ENCODE measurements at regions of chr18 and their contacts with region 1.

Region 1: DNA sequence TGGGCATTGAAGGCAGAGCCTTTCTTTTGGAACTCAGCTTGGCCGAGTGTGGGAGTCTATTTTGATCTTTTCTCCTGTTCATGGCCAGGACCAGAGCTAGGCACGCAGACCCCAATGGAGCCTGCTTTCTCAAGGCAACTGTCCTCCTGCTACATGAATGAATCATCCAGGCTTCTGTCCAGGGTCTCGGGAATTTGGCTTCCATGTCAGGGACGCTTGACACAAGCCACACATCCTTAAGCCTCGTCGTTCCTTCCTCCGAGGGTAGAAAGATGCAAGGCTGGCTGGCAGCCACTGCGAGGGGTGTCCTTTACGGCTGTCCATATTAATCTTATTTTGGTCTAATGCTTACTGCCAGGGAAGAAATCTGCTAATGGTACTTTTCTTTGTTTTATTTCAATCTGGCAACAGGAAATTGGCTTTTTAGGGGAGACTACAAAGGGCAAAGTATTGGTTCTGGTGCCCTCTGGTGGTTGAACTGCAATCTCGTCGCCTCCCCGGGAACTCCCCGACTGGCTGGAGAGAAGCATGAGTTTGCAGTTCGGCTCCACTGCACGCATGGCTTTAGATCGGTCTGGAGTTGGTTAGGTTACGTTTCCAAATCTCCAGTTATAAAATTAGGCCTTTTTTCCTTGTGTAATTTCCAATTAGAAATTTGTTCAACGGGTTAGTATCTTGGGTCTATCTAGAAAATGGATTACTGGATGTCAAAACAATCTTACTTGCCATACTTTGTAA is 135.2 kb downstream of the ALPK2 start:
- DNase-seq: peak; percentile 79
- ATAC-seq: peak; percentile 84
- H3K4me3 Mint-ChIP-seq: no peak overlapping the region
- H3K27ac Mint-ChIP-seq: no peak overlapping the region
- H3K4me1 Mint-ChIP-seq: peaks cover 34% of the 10 kb centered on the region
- H3K27me3 Mint-ChIP-seq: no peaks in the 10 kb centered on the region; the same call in none of the 2 replicates
- CTCF ChIP-seq: peak; percentile 78

Region 2: GRCh38 chr18:58314284-58314683 is 179.4 kb before region 1 on chr18:
- CTCF ChIA-PET with region 1: no interaction called
- POLR2A ChIA-PET with region 1: no interaction called
- DNase-seq: no peak
- ATAC-seq: no peak
- H3K4me3 Mint-ChIP-seq: no peak overlapping the region
- H3K27ac Mint-ChIP-seq: no peak overlapping the region
- H3K4me1 Mint-ChIP-seq: peaks cover 32% of the 10 kb centered on the region
- H3K27me3 Mint-ChIP-seq: no peaks in the 10 kb centered on the region; the same call in 1 of the 2 replicates
- CTCF ChIP-seq: no peak

Region 3: GRCh38 chr18:58338961-58339592 is 154.6 kb before region 1 on chr18:
- CTCF ChIA-PET with region 1: interaction called, 11 read pairs
- POLR2A ChIA-PET with region 1: no interaction called
- DNase-seq: peak; percentile 60
- ATAC-seq: peak; percentile 79
- H3K4me3 Mint-ChIP-seq: peak overlapping the region; percentile 67
- H3K27ac Mint-ChIP-seq: peak overlapping the region; percentile 71
- H3K4me1 Mint-ChIP-seq: peaks cover 87% of the 10 kb centered on the region
- H3K27me3 Mint-ChIP-seq: no peaks in the 10 kb centered on the region
- CTCF ChIP-seq: no peak

Region 4: GRCh38 chr18:58392324-58393000 is 101.2 kb before region 1 on chr18:
- CTCF ChIA-PET with region 1: interaction called, 11 read pairs
- POLR2A ChIA-PET with region 1: no interaction called
- DNase-seq: no peak
- ATAC-seq: peak; percentile 41
- H3K4me3 Mint-ChIP-seq: no peak overlapping the region
- H3K27ac Mint-ChIP-seq: peak overlapping the region; percentile 84
- H3K4me1 Mint-ChIP-seq: peaks cover 14% of the 10 kb centered on the region
- H3K27me3 Mint-ChIP-seq: no peaks in the 10 kb centered on the region
- CTCF ChIP-seq: no peak

Region 5: GRCh38 chr18:58407649-58408407 is 85.9 kb before region 1 on chr18:
- CTCF ChIA-PET with region 1: interaction called, 11 read pairs
- POLR2A ChIA-PET with region 1: no interaction called
- DNase-seq: no peak
- ATAC-seq: peak; percentile 56
- H3K4me3 Mint-ChIP-seq: no peak overlapping the region
- H3K27ac Mint-ChIP-seq: no peak overlapping the region
- H3K4me1 Mint-ChIP-seq: peaks cover 4% of the 10 kb centered on the region
- H3K27me3 Mint-ChIP-seq: no peaks in the 10 kb centered on the region; the same call in 1 of the 2 replicates
- CTCF ChIP-seq: no peak

Region 6: GRCh38 chr18:58511897-58512581 is 18.4 kb after region 1 on chr18:
- CTCF ChIA-PET with region 1: interaction called, 11 read pairs
- POLR2A ChIA-PET with region 1: no interaction called
- DNase-seq: peak; percentile 73
- ATAC-seq: peak; percentile 82
- H3K4me3 Mint-ChIP-seq: peak overlapping the region; percentile 45
- H3K27ac Mint-ChIP-seq: peak overlapping the region; percentile 88
- H3K4me1 Mint-ChIP-seq: peaks cover 34% of the 10 kb centered on the region
- H3K27me3 Mint-ChIP-seq: no peaks in the 10 kb centered on the region
- CTCF ChIP-seq: no peak

Region 7: GRCh38 chr18:58761970-58762780 is 268.5 kb after region 1 on chr18:
- CTCF ChIA-PET with region 1: interaction called, 43 read pairs
- POLR2A ChIA-PET with region 1: no interaction called
- DNase-seq: no peak
- ATAC-seq: no peak
- H3K4me3 Mint-ChIP-seq: no peak overlapping the region
- H3K27ac Mint-ChIP-seq: no peak overlapping the region
- H3K4me1 Mint-ChIP-seq: peaks cover 11% of the 10 kb centered on the region
- H3K27me3 Mint-ChIP-seq: no peaks in the 10 kb centered on the region; the same call in 1 of the 2 replicates
- CTCF ChIP-seq: no peak

Measured in WTC11 (cell line).